Dendritic cell treated with granulocyte-macrophage colony-stimulating factor and Interleukin-4, amounts not matched to agents 40 ng/mL and 50 ng/mL, for 4 days (primary cell): ENCODE measurements at regions of chr1 and their contacts with region 1.

Region 1: GRCh38 chr1:184222652-184223052 is 164.2 kb upstream of the C1orf21 start:
- H3K4me3 Mint-ChIP-seq: no peak overlapping the region
- H3K27ac Mint-ChIP-seq: no peak overlapping the region
- H3K4me1 Mint-ChIP-seq: peaks cover 8% of the 10 kb centered on the region
- H3K27me3 Mint-ChIP-seq: no peaks in the 10 kb centered on the region

Region 2: DNA sequence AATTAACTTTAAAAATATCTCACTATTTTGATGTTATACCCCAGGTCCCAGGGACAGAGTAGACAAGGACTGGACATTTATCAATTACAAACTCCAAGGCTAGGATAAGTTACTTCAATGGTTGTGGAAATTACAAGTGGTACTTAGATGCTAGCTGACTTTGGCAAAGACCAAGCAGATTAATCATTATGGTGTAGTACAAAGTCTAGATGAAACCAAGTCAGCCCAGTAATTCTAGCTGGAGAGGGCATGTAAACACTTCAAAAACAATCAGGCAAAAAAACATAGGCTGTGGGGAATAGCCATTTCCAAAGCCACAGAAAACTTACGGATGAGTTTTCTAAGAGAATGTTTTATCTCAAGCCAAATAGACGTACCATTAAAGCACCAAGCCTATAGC is 46.6 kb before region 1 on chr1:
- intact Hi-C with region 1: no loop called
- H3K4me3 Mint-ChIP-seq: no peak overlapping the region
- H3K27ac Mint-ChIP-seq: no peak overlapping the region
- H3K4me1 Mint-ChIP-seq: no peaks in the 10 kb centered on the region
- H3K27me3 Mint-ChIP-seq: no peaks in the 10 kb centered on the region

Region 3: DNA sequence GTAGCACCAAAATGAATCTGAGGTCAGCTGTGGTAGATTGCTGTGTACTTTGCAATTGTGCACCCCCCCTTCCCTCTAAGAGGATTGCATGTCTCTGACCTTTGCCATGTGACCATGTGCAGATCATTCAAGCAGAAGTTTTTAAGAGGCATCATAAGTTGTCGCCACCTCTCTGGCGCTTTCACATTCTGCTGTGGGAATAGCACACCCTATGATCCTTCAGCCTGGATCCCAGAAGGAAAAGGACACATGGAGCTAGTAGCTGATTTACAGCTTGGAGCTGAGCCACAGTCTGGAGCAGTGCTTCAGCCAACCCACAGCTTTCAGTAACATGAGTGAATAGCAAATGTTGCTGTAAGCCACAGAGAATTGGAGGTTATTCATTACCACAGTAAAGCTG is 12.6 kb before region 1 on chr1:
- intact Hi-C with region 1: no loop called
- H3K4me3 Mint-ChIP-seq: no peak overlapping the region
- H3K27ac Mint-ChIP-seq: no peak overlapping the region
- H3K4me1 Mint-ChIP-seq: peaks cover 23% of the 10 kb centered on the region
- H3K27me3 Mint-ChIP-seq: no peaks in the 10 kb centered on the region

Region 4: GRCh38 chr1:184563308-184563707 is 340.7 kb after region 1 on chr1:
- intact Hi-C with region 1: loop called (anchors 5 kb)
- H3K4me3 Mint-ChIP-seq: no peak overlapping the region
- H3K27ac Mint-ChIP-seq: no peak overlapping the region
- H3K4me1 Mint-ChIP-seq: peaks cover 20% of the 10 kb centered on the region
- H3K27me3 Mint-ChIP-seq: no peaks in the 10 kb centered on the region

Region 5: GRCh38 chr1:184743062-184743756 is 520.6 kb after region 1 on chr1:
- intact Hi-C with region 1: no loop called
- H3K4me3 Mint-ChIP-seq: no peak overlapping the region
- H3K27ac Mint-ChIP-seq: no peak overlapping the region
- H3K4me1 Mint-ChIP-seq: peaks cover 25% of the 10 kb centered on the region
- H3K27me3 Mint-ChIP-seq: no peaks in the 10 kb centered on the region